Mammary epithelial cell (primary cell): ENCODE measurements at regions of chr5 and their contacts with region 1.

Region 1: GRCh38 chr5:34656001-34656699 is at the start of gene RAI14:
- DNase-seq: peak; percentile 80
- H3K4me3 ChIP-seq: peak within 1 kb of the TSS; percentile 79 to 95 (median 83)
- H3K27ac ChIP-seq: peak within 1 kb of the TSS; percentile 68
- H3K4me1 ChIP-seq: peaks cover 16% of the 10 kb centered on the region
- H3K27me3 ChIP-seq: no peaks in the 10 kb centered on the region
- CTCF ChIP-seq: no peak
- total RNA-seq, gene RAI14: 114 to 184 TPM

Region 2: GRCh38 chr5:34522599-34523386 is 133.4 kb before region 1 on chr5:
- CTCF ChIA-PET with region 1: no interaction called
- dilution Hi-C with region 1: no loop called
- in situ Hi-C with region 1: no loop called
- intact Hi-C with region 1: loop called (anchors 1 kb)
- DNase-seq: peak; percentile 73
- H3K4me3 ChIP-seq: no peak overlapping the region
- H3K27ac ChIP-seq: no peak overlapping the region
- H3K4me1 ChIP-seq: peaks cover 19% of the 10 kb centered on the region
- H3K27me3 ChIP-seq: no peaks in the 10 kb centered on the region
- CTCF ChIP-seq: peak; percentile 71 to 74

Region 3: DNA sequence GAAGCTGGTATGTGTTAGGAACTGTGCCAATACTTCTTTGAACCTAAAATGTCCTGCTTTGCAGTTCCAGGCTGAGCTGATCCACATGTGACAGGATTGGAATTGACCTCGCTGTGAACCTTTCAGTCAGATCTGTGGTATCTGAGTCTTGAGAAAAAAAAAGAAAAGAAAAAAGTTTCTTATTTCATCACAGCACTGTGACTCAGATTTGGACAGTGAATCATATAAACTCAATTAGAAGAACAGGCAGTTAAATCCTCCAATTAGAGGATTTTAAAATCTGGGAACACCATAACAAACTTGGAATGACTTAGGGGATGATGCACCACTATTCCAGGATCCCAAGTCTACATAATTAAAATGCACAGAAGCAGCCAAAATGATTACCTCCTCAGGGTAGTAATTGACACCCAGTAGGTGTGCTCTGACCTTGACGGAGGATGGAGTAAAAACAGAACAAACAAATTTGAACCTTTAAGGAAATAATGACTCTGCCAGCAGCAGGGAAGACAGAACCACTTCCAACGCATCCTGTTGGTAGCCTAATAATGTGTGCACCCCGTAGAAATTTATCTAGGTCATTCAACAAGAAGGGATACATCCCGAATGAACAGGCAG is 57.9 kb before region 1 on chr5:
- CTCF ChIA-PET with region 1: interaction called, 3 read pairs
- dilution Hi-C with region 1: no loop called
- in situ Hi-C with region 1: no loop called
- intact Hi-C with region 1: loop called (anchors 2 kb)
- DNase-seq: peak; percentile 93
- H3K4me3 ChIP-seq: no peak overlapping the region
- H3K27ac ChIP-seq: peak overlapping the region; percentile 69
- H3K4me1 ChIP-seq: peaks cover 29% of the 10 kb centered on the region
- H3K27me3 ChIP-seq: no peaks in the 10 kb centered on the region
- CTCF ChIP-seq: no peak

Region 4: GRCh38 chr5:34838785-34839714 is 182.9 kb after region 1 on chr5 and contains the start of gene TTC23L:
- CTCF ChIA-PET with region 1: interaction called, 3 read pairs
- dilution Hi-C with region 1: no loop called
- in situ Hi-C with region 1: no loop called
- intact Hi-C with region 1: loop called (anchors 10 kb)
- DNase-seq: peak; percentile 91
- H3K4me3 ChIP-seq: peak within 1 kb of the TSS; percentile 42 to 62 (median 57)
- H3K27ac ChIP-seq: peak within 1 kb of the TSS; percentile 46
- H3K4me1 ChIP-seq: no peaks in the 10 kb centered on the region
- H3K27me3 ChIP-seq: no peaks in the 10 kb centered on the region
- CTCF ChIP-seq: no peak
- total RNA-seq, gene TTC23L: 0.17 TPM in 1 of 2 donors, not detected in the other

Region 5: GRCh38 chr5:34905564-34905963 is 249.4 kb after region 1 on chr5:
- CTCF ChIA-PET with region 1: no interaction called
- dilution Hi-C with region 1: no loop called
- in situ Hi-C with region 1: no loop called
- intact Hi-C with region 1: no loop called
- DNase-seq: no peak
- H3K4me3 ChIP-seq: no peak overlapping the region
- H3K27ac ChIP-seq: no peak overlapping the region
- H3K4me1 ChIP-seq: no peaks in the 10 kb centered on the region
- H3K27me3 ChIP-seq: no peaks in the 10 kb centered on the region
- CTCF ChIP-seq: peak; percentile 23 to 48